B cell (primary cell): ENCODE measurements at regions of chr4 and their contacts with region 1.

Region 1: GRCh38 chr4:81471588-81472288 is at the start of gene RASGEF1B:
- DNase-seq: peak; percentile 98
- ATAC-seq: peak; percentile 79
- H3K4me3 ChIP-seq: peak within 1 kb of the TSS; percentile 85 to 99 (median 98)
- H3K4me3 Mint-ChIP-seq: peak within 1 kb of the TSS; percentile 98
- H3K27ac ChIP-seq: peak within 1 kb of the TSS; percentile 98 to 100
- H3K27ac Mint-ChIP-seq: peak within 1 kb of the TSS; percentile 97
- H3K4me1 ChIP-seq: peaks cover 38 to 46% of the 10 kb centered on the region in 2 donors
- H3K4me1 Mint-ChIP-seq: peaks cover 49% of the 10 kb centered on the region
- H3K27me3 ChIP-seq: no peaks in the 10 kb centered on the region
- H3K27me3 Mint-ChIP-seq: no peaks in the 10 kb centered on the region
- CTCF ChIP-seq: no peak
- total RNA-seq, gene RASGEF1B: 130 and 141 TPM in 2 replicates

Region 2: GRCh38 chr4:80948141-80948540 is 523.6 kb before region 1 on chr4:
- CTCF ChIA-PET with region 1: no interaction called
- POLR2A ChIA-PET with region 1: no interaction called
- intact Hi-C with region 1: no loop called
- DNase-seq: no peak
- ATAC-seq: no peak
- H3K4me3 ChIP-seq: no peak overlapping the region
- H3K4me3 Mint-ChIP-seq: no peak overlapping the region
- H3K27ac ChIP-seq: no peak overlapping the region
- H3K27ac Mint-ChIP-seq: no peak overlapping the region
- H3K4me1 ChIP-seq: no peaks in the 10 kb centered on the region
- H3K4me1 Mint-ChIP-seq: no peaks in the 10 kb centered on the region
- H3K27me3 ChIP-seq: no peaks in the 10 kb centered on the region
- H3K27me3 Mint-ChIP-seq: no peaks in the 10 kb centered on the region
- CTCF ChIP-seq: no peak

Region 3: GRCh38 chr4:81421346-81422218 is 50.2 kb before region 1 on chr4:
- CTCF ChIA-PET with region 1: interaction called, 10 read pairs
- POLR2A ChIA-PET with region 1: interaction called, 7 read pairs
- intact Hi-C with region 1: loop called (anchors 2 kb)
- DNase-seq: peak; percentile 83
- ATAC-seq: peak; percentile 98
- H3K4me3 ChIP-seq: no peak overlapping the region
- H3K4me3 Mint-ChIP-seq: peak overlapping the region; percentile 59
- H3K27ac ChIP-seq: peak overlapping the region; percentile 51 to 73
- H3K27ac Mint-ChIP-seq: peak overlapping the region; percentile 95
- H3K4me1 ChIP-seq: peaks cover 12 to 24% of the 10 kb centered on the region in 2 donors
- H3K4me1 Mint-ChIP-seq: peaks cover 42% of the 10 kb centered on the region
- H3K27me3 ChIP-seq: no peaks in the 10 kb centered on the region
- H3K27me3 Mint-ChIP-seq: no peaks in the 10 kb centered on the region
- CTCF ChIP-seq: no peak

Region 4: GRCh38 chr4:81505004-81505598 is 33.4 kb after region 1 on chr4:
- CTCF ChIA-PET with region 1: interaction called, 21 read pairs
- POLR2A ChIA-PET with region 1: interaction called, 8 read pairs
- intact Hi-C with region 1: loop called (anchors 5 kb)
- DNase-seq: peak; percentile 85
- ATAC-seq: peak; percentile 69
- H3K4me3 ChIP-seq: peak overlapping the region in 3 of 5 experiments; percentile 6 to 33 (median 28)
- H3K4me3 Mint-ChIP-seq: peak overlapping the region; percentile 81
- H3K27ac ChIP-seq: peak overlapping the region; percentile 56 to 81
- H3K27ac Mint-ChIP-seq: peak overlapping the region; percentile 88
- H3K4me1 ChIP-seq: peaks cover 45 to 58% of the 10 kb centered on the region in 2 donors
- H3K4me1 Mint-ChIP-seq: peaks cover 70% of the 10 kb centered on the region
- H3K27me3 ChIP-seq: no peaks in the 10 kb centered on the region
- H3K27me3 Mint-ChIP-seq: no peaks in the 10 kb centered on the region
- CTCF ChIP-seq: no peak

Region 5: DNA sequence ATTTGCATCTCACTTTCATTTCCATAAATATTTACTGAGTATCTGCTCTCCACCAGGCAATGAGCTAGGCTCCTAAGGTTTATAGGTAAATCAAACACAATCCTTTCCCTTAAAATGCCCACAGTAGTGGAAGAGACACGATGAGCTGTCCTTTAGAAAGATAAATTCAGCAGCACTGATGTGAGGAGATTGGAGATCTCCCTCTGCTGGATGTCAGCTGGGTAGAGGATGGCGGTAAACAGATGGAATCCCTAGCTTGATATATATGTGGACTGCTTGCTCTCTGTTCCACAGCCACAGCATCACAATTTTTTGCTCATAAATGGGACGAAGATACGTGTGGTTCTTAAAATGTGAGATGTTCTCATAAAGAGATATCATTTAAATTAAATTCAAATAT is 216.3 kb after region 1 on chr4:
- CTCF ChIA-PET with region 1: interaction called, 148 read pairs
- POLR2A ChIA-PET with region 1: interaction called, 3 read pairs
- intact Hi-C with region 1: loop called (anchors 1 kb)
- DNase-seq: peak; percentile 16
- ATAC-seq: peak; percentile 36
- H3K4me3 ChIP-seq: no peak overlapping the region
- H3K4me3 Mint-ChIP-seq: no peak overlapping the region
- H3K27ac ChIP-seq: no peak overlapping the region
- H3K27ac Mint-ChIP-seq: no peak overlapping the region
- H3K4me1 ChIP-seq: peaks cover 0 to 4% of the 10 kb centered on the region in 2 donors
- H3K4me1 Mint-ChIP-seq: peaks cover 10% of the 10 kb centered on the region
- H3K27me3 ChIP-seq: no peaks in the 10 kb centered on the region
- H3K27me3 Mint-ChIP-seq: no peaks in the 10 kb centered on the region
- CTCF ChIP-seq: no peak

Region 6: GRCh38 chr4:81839347-81840042 is 367.8 kb after region 1 on chr4:
- CTCF ChIA-PET with region 1: interaction called, 332 read pairs
- POLR2A ChIA-PET with region 1: interaction called, 7 read pairs
- intact Hi-C with region 1: loop called (anchors 1 kb)
- DNase-seq: no peak
- ATAC-seq: no peak
- H3K4me3 ChIP-seq: no peak overlapping the region
- H3K4me3 Mint-ChIP-seq: no peak overlapping the region
- H3K27ac ChIP-seq: no peak overlapping the region
- H3K27ac Mint-ChIP-seq: no peak overlapping the region
- H3K4me1 ChIP-seq: peaks cover 0 to 4% of the 10 kb centered on the region in 2 donors
- H3K4me1 Mint-ChIP-seq: peaks cover 9% of the 10 kb centered on the region
- H3K27me3 ChIP-seq: no peaks in the 10 kb centered on the region
- H3K27me3 Mint-ChIP-seq: no peaks in the 10 kb centered on the region
- CTCF ChIP-seq: no peak

Region 7: GRCh38 chr4:82201805-82202641 is 730.3 kb after region 1 on chr4:
- CTCF ChIA-PET with region 1: interaction called, 8 read pairs
- POLR2A ChIA-PET with region 1: no interaction called
- intact Hi-C with region 1: loop called (anchors 2 kb)
- DNase-seq: peak; percentile 69
- ATAC-seq: peak; percentile 43
- H3K4me3 ChIP-seq: no peak overlapping the region
- H3K4me3 Mint-ChIP-seq: no peak overlapping the region
- H3K27ac ChIP-seq: no peak overlapping the region
- H3K27ac Mint-ChIP-seq: no peak overlapping the region
- H3K4me1 ChIP-seq: no peaks in the 10 kb centered on the region
- H3K4me1 Mint-ChIP-seq: no peaks in the 10 kb centered on the region
- H3K27me3 ChIP-seq: no peaks in the 10 kb centered on the region
- H3K27me3 Mint-ChIP-seq: peaks cover 16% of the 10 kb centered on the region
- CTCF ChIP-seq: peak; percentile 85